GM18951 (cell line): ENCODE measurements at regions of chr1 and their contacts with region 1.

Region 1: DNA sequence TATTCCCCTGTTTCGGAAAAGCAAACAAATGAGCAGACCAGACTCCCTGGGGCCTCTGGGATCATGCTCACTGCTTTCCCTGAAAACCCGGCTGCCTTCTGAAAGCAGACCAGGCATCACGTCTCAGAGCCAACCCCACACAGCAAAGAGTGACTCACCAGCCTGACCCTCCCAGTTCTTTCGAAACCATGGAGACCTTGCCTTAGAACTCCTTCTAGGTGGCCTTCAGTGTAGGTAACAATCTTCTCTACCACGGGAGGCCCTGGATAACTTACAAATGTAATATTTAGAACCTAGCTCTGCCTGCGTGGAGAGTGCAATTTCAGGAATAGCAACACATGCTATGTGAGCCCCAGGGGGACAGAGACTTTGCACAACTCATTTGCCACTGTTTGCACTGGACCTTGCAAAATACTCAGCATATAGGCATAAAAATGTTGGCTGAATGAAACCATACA is 105.2 kb downstream of the SUSD4 start:
- POLR2A ChIP-seq: no peak

Region 2: DNA sequence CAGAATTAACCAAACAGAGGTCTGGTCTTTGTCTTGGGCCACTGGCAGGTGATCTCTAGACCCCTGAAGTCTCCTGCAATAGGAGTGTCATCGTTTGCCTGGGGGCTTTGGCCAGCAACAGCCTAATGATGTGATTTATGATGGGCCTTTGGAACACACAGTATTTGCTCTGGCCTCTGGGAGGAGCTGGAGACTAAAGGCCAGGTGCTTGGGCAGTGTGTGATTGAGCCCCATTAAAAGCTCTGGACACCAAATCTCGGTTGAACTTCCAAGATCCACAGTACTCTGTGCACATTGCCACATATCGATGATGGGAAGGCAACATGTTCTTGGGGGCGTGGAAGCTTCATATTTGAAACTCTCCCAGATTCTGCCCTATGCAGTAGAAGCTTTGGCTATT is 83.7 kb before region 1 on chr1:
- in situ Hi-C with region 1: no loop called
- POLR2A ChIP-seq: no peak

Region 3: GRCh38 chr1:223437151-223437550 is 178.4 kb after region 1 on chr1:
- in situ Hi-C with region 1: no loop called
- POLR2A ChIP-seq: no peak

Region 4: GRCh38 chr1:223652436-223652941 is 393.7 kb after region 1 on chr1:
- in situ Hi-C with region 1: loop called (anchors 10 kb)
- POLR2A ChIP-seq: no peak

Region 5: GRCh38 chr1:223665552-223666312 is 407.0 kb after region 1 on chr1 and contains the start of gene CAPN8:
- in situ Hi-C with region 1: no loop called
- POLR2A ChIP-seq: no peak